Posterior cingulate gyrus (tissue), 11 donors: ENCODE measurements at regions of chr4 and their contacts with region 1.

Region 1: DNA sequence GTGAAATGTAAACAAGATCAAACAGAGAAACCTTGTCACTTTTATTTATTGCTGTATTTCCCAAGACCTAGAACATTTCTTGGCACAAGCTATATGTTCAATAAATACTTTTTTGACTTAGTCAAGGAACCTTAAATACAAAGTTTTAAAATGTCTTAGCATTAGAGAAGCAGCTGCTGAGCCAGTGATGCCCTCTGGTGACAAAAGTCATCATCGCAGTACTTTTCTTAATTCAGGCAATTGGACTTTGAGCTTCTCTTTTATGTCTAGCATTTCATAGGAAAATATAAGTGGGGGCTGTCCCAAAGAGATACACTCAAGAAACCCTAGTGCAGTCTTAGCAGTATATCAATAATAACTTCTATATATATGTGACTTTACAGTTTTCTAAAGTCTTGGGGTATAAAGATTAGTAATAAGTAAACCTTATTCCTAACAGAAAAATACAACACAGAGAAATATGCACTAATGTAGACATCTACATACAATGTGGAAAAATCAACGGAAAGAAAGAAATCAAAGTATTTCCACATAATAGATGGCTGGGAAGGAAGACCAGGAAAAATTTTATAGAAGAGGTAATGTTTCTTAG is 118.4 kb downstream of the DTHD1 start:
- DNase-seq: peak in 4 of 10 donors; percentile 20 to 49 (median 32)

Region 2: GRCh38 chr4:36461344-36461743 is 61.5 kb after region 1 on chr4:
- intact Hi-C with region 1: no loop called
- DNase-seq: no peak

Region 3: DNA sequence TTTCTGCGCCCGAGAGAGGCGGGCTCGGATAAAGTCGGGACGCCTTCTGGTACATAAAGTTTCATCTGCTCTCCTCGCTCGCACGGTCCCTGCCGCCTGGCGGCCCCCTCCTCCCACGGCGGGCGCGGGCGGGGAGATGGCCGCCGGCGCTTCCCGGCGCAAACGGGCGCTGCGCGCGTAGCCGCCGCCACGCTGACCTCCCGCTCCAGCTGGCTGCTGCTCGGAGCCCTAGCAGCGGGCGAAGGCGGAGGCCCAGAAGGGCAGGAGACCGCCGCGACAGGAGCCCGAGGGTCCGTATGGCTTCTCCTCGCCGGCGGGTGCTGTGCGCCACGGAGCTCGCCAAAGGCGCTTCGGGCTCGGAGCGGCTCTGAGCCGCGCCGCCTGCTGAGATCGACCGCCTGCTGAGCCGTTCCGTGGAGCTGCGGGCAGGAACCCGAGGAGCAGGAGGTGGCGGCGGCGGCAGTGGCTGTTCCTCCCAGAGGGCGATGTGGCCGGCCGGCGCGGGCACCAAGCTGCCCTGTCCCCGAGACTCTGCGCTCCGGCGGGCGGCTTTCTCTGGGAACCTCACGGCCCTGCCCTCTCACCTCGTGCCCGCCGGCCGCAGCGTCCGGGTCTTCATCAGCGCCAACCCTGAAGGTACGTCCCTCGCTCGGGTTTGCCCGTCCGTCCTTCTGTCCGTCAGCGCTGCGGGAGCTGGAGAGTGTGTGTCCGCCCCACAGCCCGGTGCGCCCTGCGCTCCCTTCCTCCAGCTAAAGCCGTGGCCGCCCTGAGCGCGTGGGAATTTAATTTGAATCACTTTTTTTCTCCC is 844.9 kb after region 1 on chr4 and contains the start of gene NWD2:
- intact Hi-C with region 1: loop called (anchors 10 kb)
- DNase-seq: peak in 9 of 10 donors; percentile 12 to 89 (median 34)

Region 4: DNA sequence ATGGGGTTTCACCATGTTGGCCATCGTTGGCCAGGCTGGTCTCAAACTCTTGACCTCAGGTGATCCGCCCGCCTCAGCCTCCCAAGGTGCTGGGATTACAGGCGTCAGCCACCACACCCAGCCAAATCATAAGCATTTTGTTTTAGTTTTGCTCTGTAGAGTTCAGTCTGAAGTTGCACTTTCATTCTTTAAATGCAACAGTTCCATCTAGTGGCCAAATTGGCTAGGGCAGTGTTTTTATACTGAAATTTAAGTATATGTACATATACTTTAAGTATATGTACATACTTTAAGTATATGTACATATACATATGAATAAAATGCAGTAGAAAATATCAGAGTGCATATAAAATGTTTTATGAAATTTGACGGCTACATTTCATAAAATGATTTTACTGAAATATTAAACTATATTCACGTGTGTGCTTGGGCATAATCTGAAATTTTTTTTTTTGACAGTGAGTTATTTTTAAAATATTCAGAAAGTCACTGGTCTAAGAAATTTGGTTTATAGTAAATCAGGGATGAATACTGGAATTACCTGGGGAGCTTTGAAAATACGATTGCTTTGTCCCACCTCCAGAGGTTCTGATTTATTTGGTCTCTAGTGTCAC is 990.2 kb after region 1 on chr4:
- intact Hi-C with region 1: loop called (anchors 5 kb)
- DNase-seq: peak in 1 of 10 donors; percentile 75